ENCODE measurements at regions of chr21 and their contacts with region 1.

Region 1: GRCh38 chr21:16194095-16194787 is 464.5 kb downstream of the USP25 start:
- DNase-seq: peak; percentile 22 to 72
- H3K4me3 ChIP-seq: peak overlapping the region; percentile 51 to 63
- H3K27ac ChIP-seq: peak overlapping the region; percentile 73 to 76
- H3K4me1 ChIP-seq: no peaks in the 10 kb centered on the region
- H3K27me3 ChIP-seq: no peaks in the 10 kb centered on the region
- CTCF ChIP-seq: peak in 1 of 3 experiments; percentile 44

Region 2: DNA sequence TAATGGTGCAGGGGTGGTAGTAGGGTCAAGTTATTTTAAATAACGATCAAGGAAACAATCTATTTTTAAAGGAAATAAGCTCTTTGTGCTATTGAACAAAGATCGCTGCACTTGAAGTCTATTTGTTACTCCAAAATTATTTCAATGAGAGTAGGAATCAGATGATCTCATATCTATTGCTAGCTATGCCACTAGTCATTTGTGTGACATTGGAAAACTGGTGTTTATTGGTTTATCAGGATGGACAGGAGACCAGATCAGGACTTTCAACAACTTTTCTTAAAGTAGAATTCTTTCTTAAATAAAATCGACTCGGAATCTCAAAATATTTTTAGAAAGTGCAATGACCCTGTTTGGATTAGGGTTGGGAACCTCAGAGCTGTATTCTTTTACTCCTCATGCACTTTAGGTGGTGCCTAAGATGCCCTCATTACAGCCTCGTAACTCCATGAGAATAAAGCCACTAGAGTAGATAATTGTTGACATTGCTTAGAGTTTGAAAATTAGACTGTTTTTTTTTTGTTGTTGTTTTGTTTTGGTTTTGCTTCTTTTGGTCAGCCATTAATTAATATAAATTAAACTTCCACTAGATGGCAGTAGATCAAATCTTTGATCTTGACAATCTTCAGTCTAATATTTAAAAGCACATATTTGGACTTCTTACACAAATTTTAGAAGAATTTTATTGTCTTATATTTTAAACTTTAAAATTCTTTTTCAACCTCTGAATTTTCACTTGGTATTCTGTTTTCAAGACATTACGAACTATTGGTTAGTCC is 112.0 kb before region 1 on chr21:
- intact Hi-C with region 1: loop called (anchors 10 kb)
- DNase-seq: no peak
- H3K4me3 ChIP-seq: peak overlapping the region in 1 of 2 donors; percentile 24
- H3K27ac ChIP-seq: no peak overlapping the region
- H3K4me1 ChIP-seq: no peaks in the 10 kb centered on the region
- H3K27me3 ChIP-seq: no peaks in the 10 kb centered on the region
- CTCF ChIP-seq: peak; percentile 12 to 44 (median 14)

Region 3: GRCh38 chr21:16211339-16212303 is 17.4 kb after region 1 on chr21:
- intact Hi-C with region 1: loop called (anchors 2 kb)
- DNase-seq: no peak
- H3K4me3 ChIP-seq: peak overlapping the region in 1 of 2 donors; percentile 36
- H3K27ac ChIP-seq: peak overlapping the region; percentile 67 to 72
- H3K4me1 ChIP-seq: peaks cover 0 to 8% of the 10 kb centered on the region in 2 donors
- H3K27me3 ChIP-seq: no peaks in the 10 kb centered on the region
- CTCF ChIP-seq: no peak

Region 4: GRCh38 chr21:16258844-16259611 is 64.8 kb after region 1 on chr21:
- intact Hi-C with region 1: loop called (anchors 5 kb)
- DNase-seq: no peak
- H3K4me3 ChIP-seq: no peak overlapping the region
- H3K27ac ChIP-seq: no peak overlapping the region
- H3K4me1 ChIP-seq: peaks cover 0 to 4% of the 10 kb centered on the region in 2 donors
- H3K27me3 ChIP-seq: no peaks in the 10 kb centered on the region
- CTCF ChIP-seq: no peak

Region 5: DNA sequence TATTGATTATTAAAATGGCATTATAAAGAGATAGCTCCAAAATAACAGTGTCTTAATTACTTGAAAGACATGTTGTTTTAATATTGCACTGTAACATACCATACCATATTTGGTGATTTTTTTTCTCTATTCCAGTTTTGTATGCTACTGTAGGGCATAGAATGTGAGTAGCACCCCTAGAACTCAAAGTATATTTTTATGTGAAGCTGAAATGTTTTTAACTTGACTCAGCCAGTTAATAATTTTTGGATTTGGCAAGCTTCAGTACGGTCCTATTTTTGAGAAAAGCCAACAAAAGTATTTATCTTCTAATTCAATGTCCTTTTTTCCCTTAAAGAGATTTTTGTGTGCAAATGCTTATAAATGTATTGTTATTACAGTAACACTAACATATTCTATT is 129.4 kb after region 1 on chr21:
- intact Hi-C with region 1: loop called (anchors 5 kb)
- DNase-seq: no peak
- H3K4me3 ChIP-seq: no peak overlapping the region
- H3K27ac ChIP-seq: no peak overlapping the region
- H3K4me1 ChIP-seq: peaks cover 0 to 3% of the 10 kb centered on the region in 2 donors
- H3K27me3 ChIP-seq: no peaks in the 10 kb centered on the region
- CTCF ChIP-seq: no peak